MCF 10A (cell line): ENCODE measurements at regions of chr20 and their contacts with region 1.

Region 1: GRCh38 chr20:4607287-4607713 is 114.4 kb upstream of the PRND start:
- DNase-seq: peak; percentile 71
- H3K4me3 Mint-ChIP-seq: no peak overlapping the region
- H3K27ac Mint-ChIP-seq: no peak overlapping the region
- H3K4me1 Mint-ChIP-seq: peaks cover 2% of the 10 kb centered on the region
- H3K27me3 Mint-ChIP-seq: no peaks in the 10 kb centered on the region
- CTCF ChIP-seq: peak; percentile 78

Region 2: GRCh38 chr20:4563534-4563933 is 43.8 kb before region 1 on chr20:
- CTCF ChIA-PET with region 1: no interaction called
- POLR2A ChIA-PET with region 1: no interaction called
- intact Hi-C with region 1: no loop called
- DNase-seq: peak; percentile 73
- H3K4me3 Mint-ChIP-seq: no peak overlapping the region
- H3K27ac Mint-ChIP-seq: no peak overlapping the region
- H3K4me1 Mint-ChIP-seq: no peaks in the 10 kb centered on the region
- H3K27me3 Mint-ChIP-seq: peaks cover 18% of the 10 kb centered on the region
- CTCF ChIP-seq: peak; percentile 27

Region 3: DNA sequence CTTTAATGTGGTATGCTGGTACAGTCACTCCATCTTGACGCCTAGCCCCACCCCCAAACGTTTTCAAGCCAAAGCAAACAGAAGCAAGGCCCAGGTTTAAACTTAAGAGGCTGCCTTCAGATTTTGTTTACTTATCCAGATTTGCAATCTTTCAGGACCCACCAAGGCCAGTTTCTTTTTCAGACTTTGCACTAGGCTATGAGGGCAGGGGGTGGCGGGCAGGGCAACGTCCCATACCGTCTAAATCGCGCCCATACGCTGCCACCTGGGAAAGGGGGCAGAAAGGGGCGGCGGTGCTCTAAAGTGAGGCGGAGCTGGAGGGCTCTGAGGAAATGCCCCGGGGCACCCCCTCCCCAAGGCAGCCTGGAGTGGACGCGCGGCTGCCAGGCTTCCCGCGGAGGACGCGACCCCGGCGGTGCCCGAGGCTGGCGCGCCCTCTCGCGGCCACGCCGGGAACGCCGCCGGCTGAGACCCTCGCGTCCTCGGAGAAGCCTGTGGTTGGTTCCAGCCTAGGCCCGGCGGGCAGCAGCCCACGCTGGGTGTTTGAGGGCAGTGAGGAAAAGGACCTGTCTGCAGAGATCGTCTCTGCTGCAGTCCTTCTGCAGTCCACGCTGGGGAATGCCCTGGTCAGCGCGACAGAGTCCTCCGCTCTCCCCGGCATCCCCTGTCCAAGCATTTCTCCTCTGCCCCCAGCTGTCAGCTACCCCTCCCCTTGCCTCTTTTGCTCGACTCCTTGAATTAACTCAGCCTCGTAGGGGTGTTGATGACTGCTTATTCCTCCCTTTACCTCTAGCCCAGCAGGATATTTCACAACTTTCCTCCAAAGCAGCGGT is 14.8 kb before region 1 on chr20:
- CTCF ChIA-PET with region 1: interaction called, 11 read pairs
- POLR2A ChIA-PET with region 1: no interaction called
- intact Hi-C with region 1: no loop called
- DNase-seq: peak; percentile 34
- H3K4me3 Mint-ChIP-seq: peak overlapping the region; percentile 35
- H3K27ac Mint-ChIP-seq: no peak overlapping the region
- H3K4me1 Mint-ChIP-seq: no peaks in the 10 kb centered on the region
- H3K27me3 Mint-ChIP-seq: no peaks in the 10 kb centered on the region
- CTCF ChIP-seq: peak; percentile 98